Sigmoid colon (tissue), 7 donors: ENCODE measurements at regions of chr4 and their contacts with region 1.

Region 1: DNA sequence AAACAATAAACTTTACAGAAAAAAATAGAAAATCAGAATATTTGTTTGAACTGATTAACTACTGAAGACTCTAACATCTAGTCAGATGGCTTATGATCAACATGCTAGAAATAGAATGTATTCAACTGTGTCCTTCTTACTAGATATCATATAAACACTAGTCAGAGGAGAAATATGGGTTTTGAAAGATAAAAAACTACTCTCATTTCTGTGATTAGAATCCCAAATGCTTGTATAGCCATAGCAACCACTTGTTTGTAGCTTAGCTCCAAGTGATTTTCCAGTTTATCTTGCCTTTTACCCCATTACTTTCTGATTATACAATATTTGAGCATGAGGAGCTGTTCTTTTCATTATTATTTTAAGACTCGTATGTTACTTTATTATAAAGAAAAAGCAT is 31.2 kb downstream of the USP38 start:
- DNase-seq: no peak
- H3K4me3 ChIP-seq: no peak overlapping the region
- H3K27ac ChIP-seq: peak overlapping the region in 1 of 4 donors; percentile 41
- H3K4me1 ChIP-seq: peaks cover 0 to 21% (median 5%) of the 10 kb centered on the region in 4 donors
- H3K27me3 ChIP-seq: no peaks in the 10 kb centered on the region
- CTCF ChIP-seq: no peak
- EP300 ChIP-seq: no peak
- POLR2A ChIP-seq: no peak

Region 2: GRCh38 chr4:142824368-142824767 is 391.5 kb before region 1 on chr4:
- intact Hi-C with region 1: no loop called
- DNase-seq: no peak
- H3K4me3 ChIP-seq: no peak overlapping the region
- H3K27ac ChIP-seq: no peak overlapping the region
- H3K4me1 ChIP-seq: no peaks in the 10 kb centered on the region
- H3K27me3 ChIP-seq: no peaks in the 10 kb centered on the region
- CTCF ChIP-seq: no peak
- EP300 ChIP-seq: no peak
- POLR2A ChIP-seq: no peak

Region 3: DNA sequence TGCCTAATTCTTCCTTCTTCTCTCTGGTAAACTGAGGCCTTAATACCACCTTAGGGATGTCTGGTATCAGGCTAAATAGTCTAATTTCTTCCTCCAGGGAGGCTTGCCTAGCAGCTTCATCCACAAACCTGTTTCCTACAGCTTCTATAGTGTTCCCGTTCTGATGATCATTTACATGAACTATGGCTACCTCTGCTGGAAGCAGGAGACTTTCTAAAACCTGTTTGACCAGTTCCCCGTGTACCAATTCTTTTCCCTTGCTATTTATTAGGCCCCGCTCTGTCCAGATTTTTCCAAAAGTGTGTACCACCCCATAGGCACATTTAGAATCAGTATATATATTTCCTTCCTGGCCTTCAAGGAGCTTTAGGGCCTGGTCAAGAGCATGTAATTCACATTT is 37.0 kb before region 1 on chr4:
- intact Hi-C with region 1: no loop called
- DNase-seq: no peak
- H3K4me3 ChIP-seq: no peak overlapping the region
- H3K27ac ChIP-seq: no peak overlapping the region
- H3K4me1 ChIP-seq: peaks cover 0 to 15% (median 3%) of the 10 kb centered on the region in 4 donors
- H3K27me3 ChIP-seq: no peaks in the 10 kb centered on the region
- CTCF ChIP-seq: no peak
- EP300 ChIP-seq: no peak
- POLR2A ChIP-seq: no peak

Region 4: DNA sequence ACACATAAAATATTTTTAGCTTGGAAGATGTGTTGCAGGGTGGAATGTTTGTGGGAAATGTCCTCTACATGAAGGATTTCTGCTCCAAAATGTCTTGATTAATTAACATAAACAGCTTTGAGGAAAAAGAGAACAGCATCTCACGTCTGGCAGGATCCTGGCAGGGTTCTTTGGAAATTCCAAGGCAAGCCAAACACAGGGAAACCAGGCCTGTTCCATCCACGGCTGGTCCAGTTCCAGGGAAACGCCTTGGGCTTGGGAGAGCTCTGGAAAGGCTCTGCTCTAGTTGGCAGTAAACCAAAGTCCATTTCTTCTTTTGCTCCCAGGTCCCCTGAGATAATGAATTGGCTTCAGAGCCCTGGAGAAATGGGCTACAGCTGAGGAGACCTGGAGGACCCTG is 78.4 kb after region 1 on chr4:
- intact Hi-C with region 1: loop called (anchors 5 kb)
- DNase-seq: peak; percentile 97
- H3K4me3 ChIP-seq: no peak overlapping the region
- H3K27ac ChIP-seq: peak overlapping the region; percentile 50 to 72 (median 67)
- H3K4me1 ChIP-seq: peaks cover 0 to 47% (median 32%) of the 10 kb centered on the region in 4 donors
- H3K27me3 ChIP-seq: no peaks in the 10 kb centered on the region
- CTCF ChIP-seq: no peak
- EP300 ChIP-seq: peak in 3 of 4 donors; percentile 6 to 27 (median 16)
- POLR2A ChIP-seq: no peak

Region 5: DNA sequence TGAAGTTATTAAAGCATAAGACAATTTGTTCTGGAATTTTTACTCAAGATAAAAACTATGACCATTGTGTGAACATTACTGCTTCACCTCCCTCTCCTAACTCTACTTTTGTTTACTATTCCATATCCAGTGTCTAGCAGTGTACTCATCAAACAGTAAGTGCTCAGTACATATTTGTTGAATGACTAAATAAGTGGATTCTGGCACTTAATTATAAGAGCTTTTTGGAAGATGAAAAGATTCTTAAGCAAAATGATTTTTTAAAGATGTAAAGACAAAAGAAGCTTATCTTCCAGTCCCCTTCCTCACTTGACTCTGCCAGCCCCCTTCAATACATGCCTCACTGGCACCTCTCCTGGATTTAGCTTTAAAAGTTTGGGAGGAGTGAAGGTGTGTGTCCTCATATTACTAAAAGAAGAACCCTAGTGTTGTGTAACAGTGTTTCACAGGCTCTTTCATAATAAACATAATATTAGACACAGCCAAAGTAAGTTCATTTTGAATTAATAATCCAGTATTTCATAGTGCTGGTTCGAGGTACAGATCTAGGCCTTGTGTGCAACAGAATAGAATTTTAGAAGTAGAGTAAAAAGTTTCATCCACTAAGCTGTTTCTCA is 173.8 kb after region 1 on chr4:
- intact Hi-C with region 1: loop called (anchors 5 kb)
- DNase-seq: no peak
- H3K4me3 ChIP-seq: no peak overlapping the region
- H3K27ac ChIP-seq: peak overlapping the region; percentile 55 to 67 (median 62)
- H3K4me1 ChIP-seq: peaks cover 0 to 96% (median 89%) of the 10 kb centered on the region in 4 donors
- H3K27me3 ChIP-seq: no peaks in the 10 kb centered on the region
- CTCF ChIP-seq: no peak
- EP300 ChIP-seq: no peak
- POLR2A ChIP-seq: no peak